B cell (primary cell): ENCODE measurements at regions of chr1 and their contacts with region 1.

Region 1: GRCh38 chr1:29181413-29182225 is at the start of gene SRSF4:
- DNase-seq: peak; percentile 99
- ATAC-seq: peak; percentile 93
- H3K4me3 ChIP-seq: peak within 1 kb of the TSS; percentile 85 to 100 (median 95)
- H3K4me3 Mint-ChIP-seq: peak within 1 kb of the TSS; percentile 94
- H3K27ac ChIP-seq: peak within 1 kb of the TSS; percentile 99
- H3K27ac Mint-ChIP-seq: peak within 1 kb of the TSS; percentile 95
- H3K4me1 ChIP-seq: peaks cover 32 to 42% of the 10 kb centered on the region in 2 donors
- H3K4me1 Mint-ChIP-seq: peaks cover 42% of the 10 kb centered on the region
- H3K27me3 ChIP-seq: no peaks in the 10 kb centered on the region
- H3K27me3 Mint-ChIP-seq: no peaks in the 10 kb centered on the region
- CTCF ChIP-seq: peak; percentile 79
- total RNA-seq, gene SRSF4: 93.5 and 100 TPM in 2 replicates

Region 2: DNA sequence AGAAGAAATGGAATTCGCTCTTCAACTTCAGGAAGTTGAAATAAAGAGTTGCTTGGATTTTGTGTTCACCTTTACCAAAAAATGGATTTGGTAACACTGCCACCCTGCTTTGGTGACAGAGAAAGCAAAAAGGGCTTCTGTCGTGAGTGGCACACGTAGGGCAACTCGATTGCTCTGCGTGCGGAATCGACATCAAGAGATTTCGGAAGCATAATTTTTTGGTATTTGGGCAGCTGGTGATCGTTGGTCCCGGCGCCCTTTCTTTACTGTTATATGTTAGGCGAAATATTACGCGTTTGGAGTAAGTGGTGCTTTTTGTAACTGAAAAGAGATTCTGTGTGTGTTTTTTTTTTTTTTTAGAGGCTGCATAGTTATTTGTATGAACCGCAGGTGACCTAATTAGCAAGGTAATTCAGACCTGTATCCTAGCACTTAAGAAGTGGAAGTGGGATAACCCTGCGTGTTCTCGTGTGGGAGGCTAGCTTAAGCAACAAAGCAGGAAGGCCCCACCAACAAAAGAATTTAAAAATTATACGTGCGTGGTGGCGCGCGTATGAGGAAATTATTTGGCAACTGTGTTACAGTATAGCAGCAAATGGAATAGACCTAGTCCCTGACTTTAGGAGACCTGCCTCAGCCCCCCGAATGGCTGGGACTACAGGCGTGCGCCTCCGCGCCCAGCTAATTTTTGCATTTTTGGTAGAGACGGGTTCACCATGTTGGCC is 533.0 kb before region 1 on chr1 and contains the start of gene RNU11:
- CTCF ChIA-PET with region 1: interaction called, 3 read pairs
- POLR2A ChIA-PET with region 1: interaction called, 11 read pairs
- intact Hi-C with region 1: no loop called
- DNase-seq: peak; percentile 98
- ATAC-seq: peak; percentile 72
- H3K4me3 ChIP-seq: peak within 1 kb of the TSS; percentile 9 to 60 (median 53)
- H3K4me3 Mint-ChIP-seq: peak within 1 kb of the TSS; percentile 94
- H3K27ac ChIP-seq: peak within 1 kb of the TSS; percentile 93 to 100
- H3K27ac Mint-ChIP-seq: peak within 1 kb of the TSS; percentile 100
- H3K4me1 ChIP-seq: peaks cover 25 to 33% of the 10 kb centered on the region in 2 donors
- H3K4me1 Mint-ChIP-seq: peaks cover 32% of the 10 kb centered on the region
- H3K27me3 ChIP-seq: no peaks in the 10 kb centered on the region
- H3K27me3 Mint-ChIP-seq: no peaks in the 10 kb centered on the region
- CTCF ChIP-seq: no peak
- total RNA-seq, gene RNU11: not detected in 2 replicates

Region 3: DNA sequence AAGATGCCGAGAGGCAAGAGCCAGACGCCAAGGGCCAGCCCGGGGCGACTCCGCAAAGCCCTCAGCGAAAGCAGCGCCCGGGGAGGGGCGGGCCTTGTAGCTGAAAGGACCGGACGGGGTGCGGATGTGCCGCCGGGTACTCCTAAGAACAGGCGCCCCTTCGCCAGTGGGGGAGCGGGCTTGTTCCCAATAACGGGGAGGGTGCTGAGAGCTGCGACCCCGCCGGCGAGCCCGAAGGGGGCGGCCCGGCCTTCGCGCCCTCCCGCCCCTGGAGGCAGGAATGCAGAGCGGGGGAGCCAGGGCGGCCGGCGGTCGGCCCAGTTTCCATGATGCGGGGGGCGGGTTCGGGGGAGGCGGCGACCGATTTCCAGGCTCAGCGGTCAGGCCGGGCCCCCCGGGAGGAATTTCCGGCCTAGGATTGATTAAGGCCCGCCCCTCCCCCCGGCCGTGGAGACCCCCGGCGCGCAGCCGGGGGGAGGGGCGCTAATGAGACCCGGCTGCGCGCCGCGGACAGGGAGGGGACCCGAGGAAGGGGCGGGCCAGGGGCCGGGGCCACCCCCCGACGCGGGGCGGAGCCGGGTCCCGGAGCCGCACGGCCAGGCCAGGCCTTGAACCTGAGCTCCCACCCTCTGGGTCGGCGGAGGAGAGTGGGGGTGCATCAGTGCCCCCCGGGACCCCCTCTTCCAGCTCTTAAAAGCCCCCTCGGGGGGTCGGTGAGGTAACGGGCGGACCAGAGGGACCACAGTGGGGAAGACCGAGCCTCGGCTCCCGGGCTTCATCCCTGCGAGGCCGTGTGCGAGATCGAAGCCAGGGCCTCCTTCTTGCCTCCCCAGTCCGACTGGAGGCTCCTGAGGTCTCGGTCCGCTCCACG is 57.0 kb before region 1 on chr1:
- CTCF ChIA-PET with region 1: interaction called, 4 read pairs
- POLR2A ChIA-PET with region 1: no interaction called
- intact Hi-C with region 1: loop called (anchors 5 kb)
- DNase-seq: peak; percentile 69
- ATAC-seq: peak; percentile 54
- H3K4me3 ChIP-seq: peak overlapping the region in 4 of 5 experiments; percentile 49 to 66 (median 58)
- H3K4me3 Mint-ChIP-seq: peak overlapping the region; percentile 85
- H3K27ac ChIP-seq: no peak overlapping the region
- H3K27ac Mint-ChIP-seq: no peak overlapping the region
- H3K4me1 ChIP-seq: peaks cover 31 to 32% of the 10 kb centered on the region in 2 donors
- H3K4me1 Mint-ChIP-seq: peaks cover 18% of the 10 kb centered on the region
- H3K27me3 ChIP-seq: peaks cover 0 to 50% (median 17%) of the 10 kb centered on the region in 4 experiments
- H3K27me3 Mint-ChIP-seq: peaks cover 11% of the 10 kb centered on the region
- CTCF ChIP-seq: no peak

Region 4: GRCh38 chr1:29230553-29231378 is 49.1 kb after region 1 on chr1 and contains the start of gene MECR:
- CTCF ChIA-PET with region 1: interaction called, 3 read pairs
- POLR2A ChIA-PET with region 1: interaction called, 3 read pairs
- intact Hi-C with region 1: loop called (anchors 1 kb)
- DNase-seq: peak; percentile 93
- ATAC-seq: peak; percentile 96
- H3K4me3 ChIP-seq: peak within 1 kb of the TSS; percentile 69 to 95 (median 84)
- H3K4me3 Mint-ChIP-seq: peak within 1 kb of the TSS; percentile 91
- H3K27ac ChIP-seq: peak within 1 kb of the TSS; percentile 20 to 74
- H3K27ac Mint-ChIP-seq: peak within 1 kb of the TSS; percentile 82
- H3K4me1 ChIP-seq: peaks cover 12 to 16% of the 10 kb centered on the region in 2 donors
- H3K4me1 Mint-ChIP-seq: peaks cover 14% of the 10 kb centered on the region
- H3K27me3 ChIP-seq: peaks cover 0 to 9% (median 4%) of the 10 kb centered on the region in 4 experiments
- H3K27me3 Mint-ChIP-seq: peaks cover 18% of the 10 kb centered on the region
- CTCF ChIP-seq: no peak
- total RNA-seq, gene MECR: 14.0 and 15.9 TPM in 2 replicates